Mammary epithelial cell (primary cell): ENCODE measurements at regions of chr6 and their contacts with region 1.

Region 1: GRCh38 chr6:7725849-7726415 is at the start of gene BMP6:
- DNase-seq: peak; percentile 86
- H3K4me3 ChIP-seq: peak within 1 kb of the TSS; percentile 42 to 64 (median 62)
- H3K27ac ChIP-seq: no peak within 1 kb of the TSS
- H3K4me1 ChIP-seq: peaks cover 19% of the 10 kb centered on the region
- H3K27me3 ChIP-seq: peaks cover 24% of the 10 kb centered on the region
- CTCF ChIP-seq: no peak
- total RNA-seq, gene BMP6: 0.33 to 1.2 TPM

Region 2: DNA sequence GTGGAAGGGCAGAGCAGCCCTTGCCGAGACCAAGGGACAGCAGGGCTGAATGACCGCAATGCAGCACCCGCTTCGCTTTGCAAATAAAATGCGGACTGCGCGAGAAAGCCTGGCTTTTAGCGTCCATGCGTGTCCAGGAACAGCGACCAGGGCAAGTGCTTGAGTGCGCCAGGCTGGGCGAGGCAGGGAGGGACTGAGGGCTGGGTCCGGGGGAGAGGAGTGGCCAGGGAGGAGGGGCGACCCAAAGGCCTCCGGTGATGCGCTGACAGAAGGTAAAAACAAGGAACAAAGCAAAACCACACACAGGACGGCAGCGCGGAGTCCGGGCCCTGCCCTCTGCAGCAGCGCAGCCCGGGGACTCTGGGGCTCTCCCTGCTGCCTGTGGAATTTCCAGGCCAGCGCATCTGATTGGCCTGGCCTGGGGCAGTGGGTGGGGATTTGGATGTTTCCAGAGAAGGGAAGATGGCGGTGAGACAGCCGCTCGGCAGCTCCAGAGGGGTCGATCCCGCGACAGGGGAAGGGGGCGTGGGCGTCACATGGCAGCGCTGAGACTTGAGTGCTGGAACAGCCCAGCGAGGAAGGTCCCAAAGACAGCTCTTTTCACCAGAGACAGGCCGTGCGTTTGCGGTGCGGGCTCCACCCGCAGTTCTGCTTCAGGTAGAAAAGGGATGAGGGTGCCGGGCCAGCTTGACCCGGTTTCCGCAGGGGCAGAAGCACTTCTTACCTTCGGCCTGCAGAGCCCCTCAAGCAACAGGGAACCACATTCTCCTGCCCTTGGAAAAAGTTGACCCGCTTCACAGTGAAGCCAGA is 464.7 kb before region 1 on chr6:
- CTCF ChIA-PET with region 1: no interaction called
- dilution Hi-C with region 1: no loop called
- in situ Hi-C with region 1: no loop called
- intact Hi-C with region 1: loop called (anchors 10 kb)
- DNase-seq: peak; percentile 93
- H3K4me3 ChIP-seq: peak overlapping the region; percentile 40 to 66 (median 60)
- H3K27ac ChIP-seq: peak overlapping the region; percentile 64
- H3K4me1 ChIP-seq: peaks cover 18% of the 10 kb centered on the region
- H3K27me3 ChIP-seq: no peaks in the 10 kb centered on the region
- CTCF ChIP-seq: no peak

Region 3: DNA sequence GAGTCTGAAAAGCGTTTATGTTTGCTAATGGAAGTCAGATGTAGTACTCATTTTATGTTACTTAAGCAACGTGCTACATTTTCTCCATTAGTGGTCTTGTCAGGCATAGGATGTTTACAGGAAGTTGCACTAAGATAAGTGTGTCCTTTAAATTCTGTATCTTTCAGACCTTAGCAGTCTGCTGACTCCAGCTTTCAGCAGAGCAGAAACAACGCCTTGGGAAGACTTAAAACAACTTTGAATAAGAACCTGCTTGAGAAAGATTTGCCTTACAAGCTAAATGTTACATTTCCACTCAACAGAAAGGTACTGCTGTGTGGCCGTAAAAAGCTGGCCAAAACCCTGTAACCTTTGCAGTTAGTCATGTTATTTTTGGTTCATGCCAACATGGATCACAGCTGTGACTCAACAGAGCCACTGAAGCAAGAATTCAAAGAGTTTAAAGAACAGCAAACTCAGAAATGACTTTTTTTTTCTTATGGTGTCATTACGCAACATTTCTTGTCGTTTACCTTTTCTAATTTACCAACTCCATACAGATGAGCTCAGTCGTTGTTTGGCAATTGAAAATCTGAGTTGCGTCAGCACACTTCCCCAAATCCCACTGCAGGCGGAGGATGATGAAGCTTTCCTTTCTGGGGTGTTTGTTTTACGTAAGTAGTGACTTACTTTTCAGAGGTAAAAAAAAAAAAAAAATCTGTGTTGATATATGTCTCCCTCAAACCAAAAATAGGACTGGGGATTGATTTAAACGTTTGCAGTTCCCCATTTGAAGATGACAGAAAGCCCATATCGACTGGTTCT is 27.9 kb before region 1 on chr6:
- CTCF ChIA-PET with region 1: interaction called, 5 read pairs
- dilution Hi-C with region 1: no loop called
- in situ Hi-C with region 1: no loop called
- intact Hi-C with region 1: loop called (anchors 2 kb)
- DNase-seq: peak; percentile 96
- H3K4me3 ChIP-seq: peak overlapping the region in 1 of 3 experiments; percentile 1
- H3K27ac ChIP-seq: peak overlapping the region; percentile 87
- H3K4me1 ChIP-seq: peaks cover 18% of the 10 kb centered on the region
- H3K27me3 ChIP-seq: no peaks in the 10 kb centered on the region
- CTCF ChIP-seq: no peak

Region 4: DNA sequence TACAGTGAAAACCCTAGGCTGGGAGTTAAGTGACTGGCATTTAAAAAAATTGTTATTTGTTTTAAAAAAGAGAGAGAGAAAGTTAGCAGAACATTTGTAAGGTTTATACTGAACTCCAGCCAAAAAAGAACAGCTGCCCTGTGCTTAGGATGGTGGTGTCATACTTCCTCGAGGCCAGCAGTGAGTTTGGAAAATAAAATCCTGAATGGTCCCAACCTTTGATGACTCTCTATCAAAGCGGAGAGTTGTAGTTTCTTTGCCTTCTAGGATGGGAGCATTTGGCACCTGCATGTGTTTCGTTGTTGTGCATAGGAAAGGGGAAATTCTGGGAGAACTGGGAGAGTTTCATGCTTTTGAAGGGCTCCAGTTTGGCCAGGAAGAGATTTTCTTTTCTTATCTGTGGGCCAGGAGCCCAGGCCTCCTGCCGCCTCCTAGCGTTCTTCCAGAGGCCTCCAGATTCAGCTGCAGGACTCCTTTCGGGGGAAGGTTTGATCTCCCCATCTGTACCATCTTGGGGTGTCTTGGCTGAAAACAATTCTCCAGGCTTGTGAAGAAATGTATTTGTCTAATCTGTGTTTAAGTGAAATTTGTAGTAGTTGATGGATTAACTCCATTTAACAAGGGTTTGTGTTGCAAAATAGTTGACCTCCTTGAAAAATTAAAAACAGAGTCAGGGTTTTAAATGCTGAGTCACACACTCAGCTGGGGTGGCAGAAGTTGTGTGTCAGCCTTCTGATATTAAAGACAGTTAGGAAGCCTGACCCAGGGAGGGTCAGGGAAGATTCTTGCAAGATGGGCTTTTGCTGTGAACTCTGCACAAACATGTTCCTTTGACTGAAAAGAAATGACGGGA is 121.3 kb after region 1 on chr6:
- CTCF ChIA-PET with region 1: no interaction called
- dilution Hi-C with region 1: no loop called
- in situ Hi-C with region 1: no loop called
- intact Hi-C with region 1: no loop called
- DNase-seq: peak; percentile 2
- H3K4me3 ChIP-seq: no peak overlapping the region
- H3K27ac ChIP-seq: no peak overlapping the region
- H3K4me1 ChIP-seq: no peaks in the 10 kb centered on the region
- H3K27me3 ChIP-seq: no peaks in the 10 kb centered on the region
- CTCF ChIP-seq: no peak

Region 5: GRCh38 chr6:7910654-7911344 is 184.9 kb after region 1 on chr6 and contains the start of gene TXNDC5:
- CTCF ChIA-PET with region 1: no interaction called
- dilution Hi-C with region 1: no loop called
- in situ Hi-C with region 1: no loop called
- intact Hi-C with region 1: loop called (anchors 2 kb)
- DNase-seq: peak; percentile 71
- H3K4me3 ChIP-seq: peak within 1 kb of the TSS; percentile 49 to 78 (median 74)
- H3K27ac ChIP-seq: peak within 1 kb of the TSS; percentile 42
- H3K4me1 ChIP-seq: peaks cover 17% of the 10 kb centered on the region
- H3K27me3 ChIP-seq: no peaks in the 10 kb centered on the region
- CTCF ChIP-seq: no peak
- total RNA-seq, gene TXNDC5: 109 to 170 TPM

Region 6: DNA sequence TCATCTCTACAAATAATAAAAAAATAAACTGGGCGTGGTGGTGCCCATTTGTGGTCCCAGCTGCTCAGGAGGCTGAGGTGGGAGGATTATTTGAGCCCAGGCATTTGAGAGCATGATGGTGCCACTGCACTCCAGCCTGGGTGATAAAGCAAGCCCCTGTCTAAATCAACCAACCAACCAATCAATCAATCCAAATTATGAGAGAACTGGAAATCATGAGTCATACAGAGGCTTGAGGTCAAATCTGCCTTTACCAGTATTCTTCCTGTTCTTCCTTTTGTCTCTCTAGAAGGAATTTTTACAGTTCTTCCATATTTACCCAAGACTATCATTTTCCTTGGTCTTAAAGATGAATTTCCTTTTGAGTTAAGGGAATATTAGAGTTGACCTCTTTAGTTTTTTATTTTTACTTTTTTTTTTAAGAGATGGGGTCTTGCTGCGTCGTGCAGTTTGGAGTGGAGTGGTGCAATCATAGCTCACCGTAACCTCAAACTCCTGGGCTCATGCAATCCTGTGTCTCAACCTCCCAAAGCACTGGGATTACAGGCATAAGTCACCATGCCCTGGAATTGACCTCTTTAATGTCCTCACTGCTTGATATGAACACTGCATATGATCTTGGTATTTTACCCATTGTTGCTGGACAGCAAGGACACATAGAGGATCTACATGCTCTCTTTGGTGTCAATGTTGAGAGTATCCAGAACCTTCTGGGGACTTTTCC is 228.7 kb after region 1 on chr6:
- CTCF ChIA-PET with region 1: no interaction called
- dilution Hi-C with region 1: no loop called
- in situ Hi-C with region 1: no loop called
- intact Hi-C with region 1: no loop called
- DNase-seq: no peak
- H3K4me3 ChIP-seq: no peak overlapping the region
- H3K27ac ChIP-seq: no peak overlapping the region
- H3K4me1 ChIP-seq: no peaks in the 10 kb centered on the region
- H3K27me3 ChIP-seq: no peaks in the 10 kb centered on the region
- CTCF ChIP-seq: no peak

Region 7: GRCh38 chr6:8006208-8006607 is 280.3 kb after region 1 on chr6:
- CTCF ChIA-PET with region 1: interaction called, 5 read pairs
- dilution Hi-C with region 1: loop called (anchors 10 kb)
- in situ Hi-C with region 1: no loop called
- intact Hi-C with region 1: loop called (anchors 1 kb)
- DNase-seq: peak; percentile 13
- H3K4me3 ChIP-seq: no peak overlapping the region
- H3K27ac ChIP-seq: no peak overlapping the region
- H3K4me1 ChIP-seq: no peaks in the 10 kb centered on the region
- H3K27me3 ChIP-seq: no peaks in the 10 kb centered on the region
- CTCF ChIP-seq: peak; percentile 35 to 49